Sigmoid colon (tissue), 7 donors: ENCODE measurements at regions of chr6 and their contacts with region 1.

Region 1: DNA sequence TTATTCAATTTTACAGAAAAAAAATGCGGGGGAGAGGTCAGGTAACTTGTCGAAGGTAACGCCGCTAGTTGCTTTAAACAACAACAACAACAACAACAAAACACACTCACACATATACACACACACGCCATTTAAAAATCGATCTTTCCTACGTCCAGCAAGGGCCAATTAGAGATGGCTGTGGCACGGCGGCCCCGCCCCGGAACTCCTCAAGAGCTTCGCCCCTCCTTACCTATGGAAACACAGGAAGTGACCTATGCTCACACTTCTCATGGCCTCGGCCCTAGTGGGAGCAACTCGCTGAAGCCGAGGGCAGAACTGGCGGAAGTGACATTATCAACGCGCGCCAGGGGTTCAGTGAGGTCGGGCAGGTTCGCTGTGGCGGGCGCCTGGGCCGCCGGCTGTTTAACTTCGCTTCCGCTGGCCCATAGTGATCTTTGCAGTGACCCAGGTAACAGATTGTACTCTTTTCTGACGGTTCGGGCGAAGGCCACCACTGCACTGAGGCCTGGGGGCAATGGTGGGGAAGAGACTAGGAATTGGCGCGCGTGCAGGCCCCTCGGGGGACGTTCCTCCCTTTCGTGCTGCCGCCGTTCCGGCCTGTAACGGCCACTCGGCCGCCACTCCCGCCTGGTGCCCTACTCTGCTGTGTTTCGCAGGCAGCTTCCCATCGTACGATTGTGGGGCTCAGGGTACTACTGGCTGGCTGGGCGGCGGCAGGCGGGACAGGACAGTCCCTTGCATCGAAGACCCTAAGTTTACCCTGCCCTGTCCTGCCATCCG is at the start of gene TBP:
- DNase-seq: peak; percentile 99
- H3K4me3 ChIP-seq: peak within 1 kb of the TSS; percentile 71 to 92 (median 87)
- H3K27ac ChIP-seq: peak within 1 kb of the TSS; percentile 92 to 94 (median 93)
- H3K4me1 ChIP-seq: peaks cover 0 to 50% (median 46%) of the 10 kb centered on the region in 4 donors
- H3K27me3 ChIP-seq: no peaks in the 10 kb centered on the region
- CTCF ChIP-seq: no peak
- EP300 ChIP-seq: peak in 1 of 4 donors; percentile 60
- POLR2A ChIP-seq: peak in 1 of 2 donors; percentile 54
- total RNA-seq, gene TBP: 17.1 to 31.0 (median 20.4) TPM

Region 2: GRCh38 chr6:170306324-170307079 is 247.7 kb before region 1 on chr6 and contains the start of gene FAM120B:
- intact Hi-C with region 1: loop called (anchors 5 kb)
- DNase-seq: peak; percentile 98
- H3K4me3 ChIP-seq: peak within 1 kb of the TSS; percentile 82 to 90 (median 88)
- H3K27ac ChIP-seq: peak within 1 kb of the TSS; percentile 85 to 89 (median 86)
- H3K4me1 ChIP-seq: peaks cover 0 to 42% (median 28%) of the 10 kb centered on the region in 4 donors
- H3K27me3 ChIP-seq: no peaks in the 10 kb centered on the region
- CTCF ChIP-seq: no peak
- EP300 ChIP-seq: no peak
- POLR2A ChIP-seq: peak; percentile 51 to 76
- total RNA-seq, gene FAM120B: 29.6 to 55.0 (median 45.7) TPM

Region 3: DNA sequence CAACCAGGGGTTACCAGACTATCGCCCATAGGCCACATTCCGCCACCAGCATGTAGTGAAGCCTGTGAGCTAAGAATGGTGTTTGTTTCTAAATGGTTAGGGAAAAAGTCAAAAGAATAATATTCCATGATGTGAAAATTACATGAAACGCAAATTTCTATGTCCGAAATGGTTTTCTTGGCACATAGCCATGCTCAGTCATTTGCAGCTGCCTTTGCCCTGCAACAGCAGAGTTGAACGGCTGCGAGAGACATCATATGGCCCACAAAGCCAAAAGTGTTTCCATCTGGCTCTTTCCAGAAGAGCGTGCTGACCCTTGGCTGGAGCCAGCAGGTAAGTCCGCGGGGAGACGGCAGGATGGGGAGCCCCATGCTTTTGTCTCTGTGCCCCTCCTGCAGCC is 187.0 kb before region 1 on chr6:
- intact Hi-C with region 1: no loop called
- DNase-seq: no peak
- H3K4me3 ChIP-seq: no peak overlapping the region
- H3K27ac ChIP-seq: no peak overlapping the region
- H3K4me1 ChIP-seq: no peaks in the 10 kb centered on the region
- H3K27me3 ChIP-seq: no peaks in the 10 kb centered on the region
- CTCF ChIP-seq: no peak
- EP300 ChIP-seq: no peak
- POLR2A ChIP-seq: no peak